Activated CD8-positive, alpha-beta T cell treated with anti-CD3 and anti-CD28 coated beads for 36 hours (primary cell): ENCODE measurements at regions of chr15 and their contacts with region 1.

Region 1: DNA sequence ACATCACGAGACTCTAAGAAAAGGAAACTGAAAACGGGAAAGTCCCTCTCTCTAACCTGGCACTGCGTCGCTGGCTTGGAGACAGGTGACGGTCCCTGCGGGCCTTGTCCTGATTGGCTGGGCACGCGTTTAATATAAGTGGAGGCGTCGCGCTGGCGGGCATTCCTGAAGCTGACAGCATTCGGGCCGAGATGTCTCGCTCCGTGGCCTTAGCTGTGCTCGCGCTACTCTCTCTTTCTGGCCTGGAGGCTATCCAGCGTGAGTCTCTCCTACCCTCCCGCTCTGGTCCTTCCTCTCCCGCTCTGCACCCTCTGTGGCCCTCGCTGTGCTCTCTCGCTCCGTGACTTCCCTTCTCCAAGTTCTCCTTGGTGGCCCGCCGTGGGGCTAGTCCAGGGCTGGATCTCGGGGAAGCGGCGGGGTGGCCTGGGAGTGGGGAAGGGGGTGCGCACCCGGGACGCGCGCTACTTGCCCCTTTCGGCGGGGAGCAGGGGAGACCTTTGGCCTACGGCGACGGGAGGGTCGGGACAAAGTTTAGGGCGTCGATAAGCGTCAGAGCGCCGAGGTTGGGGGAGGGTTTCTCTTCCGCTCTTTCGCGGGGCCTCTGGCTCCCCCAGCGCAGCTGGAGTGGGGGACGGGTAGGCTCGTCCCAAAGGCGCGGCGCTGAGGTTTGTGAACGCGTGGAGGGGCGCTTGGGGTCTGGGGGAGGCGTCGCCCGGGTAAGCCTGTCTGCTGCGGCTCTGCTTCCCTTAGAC is at the start of gene B2M:
- DNase-seq: peak; percentile 94
- ATAC-seq: peak; percentile 83
- H3K4me3 Mint-ChIP-seq: peak within 1 kb of the TSS; percentile 94
- H3K27ac Mint-ChIP-seq: peak within 1 kb of the TSS; percentile 100
- H3K4me1 Mint-ChIP-seq: peaks cover 40% of the 10 kb centered on the region
- H3K27me3 Mint-ChIP-seq: no peaks in the 10 kb centered on the region
- CTCF ChIP-seq: no peak
- total RNA-seq, gene B2M: 4,476 to 4,587 TPM

Region 2: DNA sequence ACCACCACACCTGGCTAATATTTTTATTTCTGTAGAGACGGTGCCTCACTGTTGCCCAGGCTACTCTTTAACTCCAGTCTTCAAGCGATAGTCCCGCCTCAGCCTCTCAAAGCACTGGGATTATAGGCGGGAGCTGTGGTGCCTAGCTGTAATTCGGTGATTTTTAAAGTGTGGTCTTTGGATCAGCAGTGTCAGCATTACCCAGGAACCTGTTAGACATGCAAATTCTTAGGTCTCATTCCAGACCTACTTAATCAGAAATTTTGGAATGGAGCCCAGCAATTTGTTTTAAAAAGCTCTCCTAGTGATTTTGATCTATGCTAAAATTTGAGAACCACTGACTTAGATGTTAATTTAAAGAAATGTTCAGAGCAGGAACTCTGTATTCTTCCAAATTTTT is 371.1 kb before region 1 on chr15:
- CTCF ChIA-PET with region 1: no interaction called
- POLR2A ChIA-PET with region 1: no interaction called
- intact Hi-C with region 1: no loop called
- DNase-seq: no peak
- ATAC-seq: no peak
- H3K4me3 Mint-ChIP-seq: no peak overlapping the region
- H3K27ac Mint-ChIP-seq: no peak overlapping the region
- H3K4me1 Mint-ChIP-seq: no peaks in the 10 kb centered on the region
- H3K27me3 Mint-ChIP-seq: no peaks in the 10 kb centered on the region
- CTCF ChIP-seq: no peak

Region 3: GRCh38 chr15:44676676-44677075 is 34.9 kb before region 1 on chr15:
- CTCF ChIA-PET with region 1: interaction called, 16 read pairs
- POLR2A ChIA-PET with region 1: interaction called, 1,862 read pairs
- intact Hi-C with region 1: loop called (anchors 5 kb)
- DNase-seq: peak; percentile 73
- ATAC-seq: peak; percentile 69
- H3K4me3 Mint-ChIP-seq: peak overlapping the region; percentile 64
- H3K27ac Mint-ChIP-seq: peak overlapping the region; percentile 90
- H3K4me1 Mint-ChIP-seq: peaks cover 81% of the 10 kb centered on the region
- H3K27me3 Mint-ChIP-seq: no peaks in the 10 kb centered on the region
- CTCF ChIP-seq: no peak

Region 4: DNA sequence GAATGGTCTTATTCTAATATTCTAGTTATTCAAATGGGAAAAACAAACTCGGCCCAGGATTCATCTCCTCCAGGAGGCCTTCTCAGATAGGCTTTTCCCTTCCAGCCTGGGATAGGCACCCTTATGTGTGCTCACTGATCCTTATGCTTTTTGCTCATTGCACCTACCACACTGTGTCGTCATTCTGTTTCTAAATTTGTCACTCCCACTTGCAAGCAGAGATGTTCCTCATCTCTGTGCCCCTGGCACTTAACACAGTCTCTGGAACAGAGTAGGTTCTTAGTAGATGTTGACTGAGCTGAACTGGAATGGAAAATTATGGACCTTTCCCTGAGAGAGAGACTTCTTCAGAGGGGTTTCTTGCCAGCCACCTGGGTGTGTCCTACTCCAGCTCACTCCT is 29.3 kb before region 1 on chr15:
- CTCF ChIA-PET with region 1: interaction called, 16 read pairs
- POLR2A ChIA-PET with region 1: interaction called, 1,862 read pairs
- intact Hi-C with region 1: loop called (anchors 5 kb)
- DNase-seq: no peak
- ATAC-seq: peak; percentile 40
- H3K4me3 Mint-ChIP-seq: peak overlapping the region; percentile 31
- H3K27ac Mint-ChIP-seq: peak overlapping the region; percentile 90
- H3K4me1 Mint-ChIP-seq: peaks cover 78% of the 10 kb centered on the region
- H3K27me3 Mint-ChIP-seq: no peaks in the 10 kb centered on the region
- CTCF ChIP-seq: no peak

Region 5: GRCh38 chr15:44698641-44699040 is 12.9 kb before region 1 on chr15:
- CTCF ChIA-PET with region 1: interaction called, 3 read pairs
- POLR2A ChIA-PET with region 1: interaction called, 1,862 read pairs
- intact Hi-C with region 1: no loop called
- DNase-seq: no peak
- ATAC-seq: no peak
- H3K4me3 Mint-ChIP-seq: no peak overlapping the region
- H3K27ac Mint-ChIP-seq: no peak overlapping the region
- H3K4me1 Mint-ChIP-seq: peaks cover 29% of the 10 kb centered on the region
- H3K27me3 Mint-ChIP-seq: no peaks in the 10 kb centered on the region
- CTCF ChIP-seq: no peak

Region 6: GRCh38 chr15:44728576-44729407 is 17.3 kb after region 1 on chr15:
- CTCF ChIA-PET with region 1: interaction called, 333 read pairs
- POLR2A ChIA-PET with region 1: interaction called, 1,567 read pairs
- intact Hi-C with region 1: loop called (anchors 1 kb)
- DNase-seq: peak; percentile 98
- ATAC-seq: peak; percentile 78
- H3K4me3 Mint-ChIP-seq: peak overlapping the region; percentile 99
- H3K27ac Mint-ChIP-seq: peak overlapping the region; percentile 100
- H3K4me1 Mint-ChIP-seq: peaks cover 61% of the 10 kb centered on the region
- H3K27me3 Mint-ChIP-seq: no peaks in the 10 kb centered on the region
- CTCF ChIP-seq: no peak

Region 7: GRCh38 chr15:44788748-44789147 is 77.2 kb after region 1 on chr15:
- CTCF ChIA-PET with region 1: no interaction called
- POLR2A ChIA-PET with region 1: interaction called, 11 read pairs
- intact Hi-C with region 1: no loop called
- DNase-seq: peak; percentile 83
- ATAC-seq: peak; percentile 72
- H3K4me3 Mint-ChIP-seq: peak overlapping the region; percentile 3
- H3K27ac Mint-ChIP-seq: peak overlapping the region; percentile 89
- H3K4me1 Mint-ChIP-seq: peaks cover 40% of the 10 kb centered on the region
- H3K27me3 Mint-ChIP-seq: no peaks in the 10 kb centered on the region
- CTCF ChIP-seq: no peak